ENCODE measurements at regions of chr11 and their contacts with region 1.

Region 1: GRCh38 chr11:108664730-108665525 is at the start of gene DDX10:
- DNase-seq: peak; percentile 98 to 99 (median 98)
- ATAC-seq: peak; percentile 99 to 100 (median 100)
- H3K4me3 ChIP-seq: peak within 1 kb of the TSS; percentile 53 to 99 (median 82)
- H3K27ac ChIP-seq: peak within 1 kb of the TSS in 11 of 12 donors; percentile 22 to 82 (median 64)
- H3K4me1 ChIP-seq: peaks cover 0 to 32% (median 23%) of the 10 kb centered on the region in 12 donors
- H3K27me3 ChIP-seq: no peaks in the 10 kb centered on the region
- CTCF ChIP-seq: peak in 4 of 12 donors; percentile 34 to 43 (median 38)
- POLR2A ChIP-seq: peak in 1 of 2 donors; percentile 60
- total RNA-seq, gene DDX10: 8.3 to 17.2 (median 12.1) TPM

Region 2: DNA sequence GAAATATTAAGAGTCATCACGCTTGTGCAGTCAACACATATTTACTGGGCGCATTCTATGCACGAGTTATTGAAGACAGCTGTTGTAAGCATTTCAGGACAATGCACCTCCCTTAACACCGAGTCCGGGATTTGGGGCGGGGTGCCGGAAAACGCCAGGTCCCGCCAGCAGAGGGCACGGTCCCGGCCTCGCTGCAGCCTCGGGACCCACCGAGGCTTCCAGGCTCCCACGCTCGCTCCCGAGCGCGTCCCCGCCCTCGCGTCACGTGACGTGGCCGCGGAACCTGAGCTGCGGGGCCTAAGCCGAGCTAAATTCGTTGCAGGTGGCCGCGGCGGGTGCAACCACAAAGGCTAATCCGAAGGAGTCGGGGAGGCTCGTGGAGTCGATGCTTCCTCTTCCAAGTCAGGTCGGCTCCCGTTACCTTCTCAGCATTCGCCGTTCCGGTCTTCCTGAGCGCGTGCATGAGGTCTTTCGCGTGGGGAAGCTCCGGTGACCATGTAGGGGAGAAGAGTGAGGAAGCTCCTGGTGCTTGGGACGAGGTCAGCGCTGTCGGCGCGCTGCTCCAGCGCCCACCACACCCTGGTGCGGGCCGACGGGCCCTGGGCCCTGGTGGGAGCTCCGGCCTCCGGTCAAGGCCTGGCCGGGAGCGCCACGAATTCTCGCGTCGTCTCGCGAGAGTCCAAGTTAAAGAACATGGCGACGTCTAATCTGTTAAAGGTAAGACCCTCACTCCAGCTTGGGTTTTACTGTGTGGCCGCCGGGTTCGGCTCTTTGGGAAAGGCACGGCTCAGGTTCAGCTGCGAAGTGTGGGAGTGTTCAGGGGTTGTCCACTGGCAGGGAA is 656.1 kb before region 1 on chr11 and contains the start of gene CUL5:
- intact Hi-C with region 1: loop called in 1 of 10 experiments (anchors 10 kb)
- DNase-seq: peak; percentile 91 to 97 (median 93)
- ATAC-seq: peak; percentile 95 to 98 (median 98)
- H3K4me3 ChIP-seq: peak within 1 kb of the TSS; percentile 71 to 99 (median 88)
- H3K27ac ChIP-seq: peak within 1 kb of the TSS; percentile 85 to 100 (median 98)
- H3K4me1 ChIP-seq: peaks cover 0 to 47% (median 35%) of the 10 kb centered on the region in 12 donors
- H3K27me3 ChIP-seq: no peaks in the 10 kb centered on the region
- CTCF ChIP-seq: peak; percentile 76 to 95 (median 89)
- POLR2A ChIP-seq: peak in 1 of 2 donors; percentile 23
- total RNA-seq, gene CUL5: 22.0 to 46.0 (median 36.8) TPM

Region 3: DNA sequence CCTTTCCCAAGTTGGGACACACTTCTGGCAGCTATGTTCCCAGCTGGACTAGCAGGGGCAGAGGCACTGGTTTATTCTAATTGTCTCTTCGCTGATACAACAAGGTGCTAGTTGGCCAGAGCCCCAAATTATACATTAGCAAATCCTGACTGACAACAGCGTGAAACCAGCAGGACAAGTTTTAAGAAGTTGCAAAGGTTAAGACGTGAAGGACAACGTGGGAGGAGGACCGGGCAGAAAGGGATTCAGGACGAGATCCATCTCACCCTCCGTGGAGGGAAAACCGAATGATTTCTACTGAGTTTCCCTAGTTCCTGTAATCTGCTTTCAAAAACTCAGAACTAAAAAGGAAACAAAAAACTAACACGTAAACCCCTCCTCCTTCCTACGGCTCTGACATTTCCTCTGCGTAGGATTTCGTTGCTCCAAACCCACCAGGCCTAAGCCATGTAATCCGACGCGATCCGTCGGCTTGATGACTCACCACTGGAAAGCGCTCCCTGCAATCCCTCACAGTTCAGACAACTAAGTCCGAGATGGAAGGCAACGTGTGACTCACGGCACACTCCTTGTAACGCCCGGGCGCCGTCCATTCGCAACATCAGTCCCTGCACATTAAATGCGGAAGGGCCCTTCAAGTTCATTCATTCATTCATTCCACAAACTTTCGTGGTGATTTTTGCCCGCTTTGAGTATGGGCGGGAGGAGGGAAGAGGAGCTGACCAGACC is 167.4 kb before region 1 on chr11:
- intact Hi-C with region 1: loop called in 1 of 10 experiments (anchors 10 kb)
- DNase-seq: peak; percentile 84 to 92 (median 87)
- ATAC-seq: peak; percentile 97 to 98 (median 98)
- H3K4me3 ChIP-seq: peak overlapping the region; percentile 64 to 95 (median 73)
- H3K27ac ChIP-seq: peak overlapping the region; percentile 84 to 98 (median 94)
- H3K4me1 ChIP-seq: peaks cover 0 to 16% (median 5%) of the 10 kb centered on the region in 12 donors
- H3K27me3 ChIP-seq: no peaks in the 10 kb centered on the region
- CTCF ChIP-seq: no peak
- POLR2A ChIP-seq: peak in 1 of 2 donors; percentile 82

Measured in heart left ventricle (tissue), 16 donors.